Naive thymus-derived CD4-positive, alpha-beta T cell (primary cell): ENCODE measurements at regions of chr17 and their contacts with region 1.

Region 1: GRCh38 chr17:38557836-38558727 is 47.7 kb downstream of the SRCIN1 start:
- DNase-seq: peak; percentile 75 to 89 (median 85)
- ATAC-seq: peak; percentile 87
- H3K4me3 ChIP-seq: peak overlapping the region; percentile 81
- H3K4me3 Mint-ChIP-seq: peak overlapping the region; percentile 87 to 100 (median 96)
- H3K27ac ChIP-seq: no peak overlapping the region
- H3K27ac Mint-ChIP-seq: peak overlapping the region in 8 of 9 donors; percentile 34 to 87 (median 70)
- H3K4me1 ChIP-seq: peaks cover 0 to 23% of the 10 kb centered on the region in 2 donors
- H3K4me1 Mint-ChIP-seq: peaks cover 16 to 31% (median 25%) of the 10 kb centered on the region in 7 donors
- H3K27me3 ChIP-seq: peaks cover 10 to 20% of the 10 kb centered on the region in 2 donors
- H3K27me3 Mint-ChIP-seq: peaks cover 12 to 66% (median 18%) of the 10 kb centered on the region in 5 donors

Region 2: DNA sequence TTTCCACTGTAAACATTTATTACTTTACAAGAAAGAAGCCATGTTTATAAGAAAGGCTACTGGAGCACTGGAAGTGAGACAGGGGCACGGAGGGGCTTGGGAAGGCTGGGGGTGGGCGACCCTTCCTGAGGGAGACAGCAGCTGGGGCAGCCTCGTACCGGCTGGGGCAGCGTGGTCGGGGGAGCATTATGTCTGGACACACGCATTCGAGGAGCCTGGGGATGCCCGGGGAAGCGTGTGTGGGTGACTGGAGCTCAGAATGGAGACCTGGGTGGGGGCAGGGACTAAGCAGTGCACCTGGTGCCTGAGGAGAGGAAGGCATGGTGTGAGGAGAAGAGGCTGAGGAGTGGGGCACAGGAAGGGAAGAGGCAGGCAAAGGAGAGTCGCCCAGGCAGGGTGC is 16.8 kb before region 1 on chr17:
- CTCF ChIA-PET with region 1: no interaction called
- POLR2A ChIA-PET with region 1: no interaction called
- intact Hi-C with region 1: no loop called
- DNase-seq: no peak
- ATAC-seq: no peak
- H3K4me3 ChIP-seq: no peak overlapping the region
- H3K4me3 Mint-ChIP-seq: no peak overlapping the region
- H3K27ac ChIP-seq: no peak overlapping the region
- H3K27ac Mint-ChIP-seq: no peak overlapping the region
- H3K4me1 ChIP-seq: no peaks in the 10 kb centered on the region
- H3K4me1 Mint-ChIP-seq: no peaks in the 10 kb centered on the region
- H3K27me3 ChIP-seq: no peaks in the 10 kb centered on the region
- H3K27me3 Mint-ChIP-seq: peaks cover 0 to 13% (median 0%) of the 10 kb centered on the region in 5 donors

Region 3: GRCh38 chr17:38572669-38573365 is 14.7 kb after region 1 on chr17:
- CTCF ChIA-PET with region 1: interaction called, 5 read pairs
- POLR2A ChIA-PET with region 1: no interaction called
- intact Hi-C with region 1: loop called in 1 of 2 experiments (anchors 2 kb)
- DNase-seq: no peak
- ATAC-seq: peak; percentile 58
- H3K4me3 ChIP-seq: no peak overlapping the region
- H3K4me3 Mint-ChIP-seq: peak overlapping the region in 9 of 10 donors; percentile 5 to 80 (median 66)
- H3K27ac ChIP-seq: no peak overlapping the region
- H3K27ac Mint-ChIP-seq: no peak overlapping the region
- H3K4me1 ChIP-seq: no peaks in the 10 kb centered on the region
- H3K4me1 Mint-ChIP-seq: peaks cover 0 to 18% (median 8%) of the 10 kb centered on the region in 7 donors
- H3K27me3 ChIP-seq: peaks cover 20 to 32% of the 10 kb centered on the region in 2 donors
- H3K27me3 Mint-ChIP-seq: peaks cover 84 to 91% (median 87%) of the 10 kb centered on the region in 5 donors

Region 4: DNA sequence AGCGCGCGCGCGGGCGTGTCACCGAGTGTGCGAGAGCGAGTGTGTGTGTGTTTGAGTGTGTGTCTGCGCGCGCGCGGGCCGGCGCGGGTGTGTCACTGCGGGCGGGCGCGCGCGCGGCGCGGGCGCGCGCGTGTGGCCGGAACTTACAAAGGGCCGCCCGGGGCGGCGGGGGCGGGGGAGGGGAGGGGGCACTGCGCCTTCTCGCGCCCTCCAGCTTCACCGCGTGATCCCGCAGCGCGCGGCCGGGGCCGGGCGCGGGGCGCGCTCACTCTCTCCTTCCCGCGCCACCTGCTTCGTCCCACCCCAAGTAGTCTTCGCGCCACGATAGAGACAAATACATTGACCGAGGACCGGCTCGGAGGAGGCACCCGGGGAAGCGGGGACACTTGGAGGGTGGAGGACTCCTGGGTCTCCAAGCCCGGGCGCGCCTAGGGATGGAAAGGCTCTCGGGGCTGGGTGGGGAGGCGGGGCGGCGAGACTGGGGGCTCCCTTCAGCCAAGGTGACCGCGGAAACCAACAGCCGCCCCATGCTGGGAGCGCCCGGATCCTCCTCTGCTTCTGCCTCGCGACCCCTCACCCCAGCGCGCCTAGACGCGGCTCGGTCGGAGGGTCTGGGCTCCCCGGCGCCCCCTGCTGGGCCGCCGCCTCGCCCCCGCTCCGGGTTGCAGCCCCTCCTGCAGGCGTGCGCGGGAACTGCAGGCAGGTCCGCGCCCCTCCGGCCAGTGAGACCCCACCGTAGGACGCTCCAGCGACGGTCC is 48.0 kb after region 1 on chr17 and contains the start of gene SRCIN1:
- CTCF ChIA-PET with region 1: interaction called, 4 read pairs
- POLR2A ChIA-PET with region 1: no interaction called
- intact Hi-C with region 1: loop called (anchors 2 to 5 kb)
- DNase-seq: peak in 6 of 9 donors; percentile 26 to 74 (median 30)
- ATAC-seq: peak; percentile 74
- H3K4me3 ChIP-seq: peak within 1 kb of the TSS; percentile 50
- H3K4me3 Mint-ChIP-seq: peak within 1 kb of the TSS; percentile 54 to 81 (median 72)
- H3K27ac ChIP-seq: no peak within 1 kb of the TSS
- H3K27ac Mint-ChIP-seq: no peak within 1 kb of the TSS
- H3K4me1 ChIP-seq: peaks cover 9 to 11% of the 10 kb centered on the region in 2 donors
- H3K4me1 Mint-ChIP-seq: peaks cover 6 to 30% (median 13%) of the 10 kb centered on the region in 7 donors
- H3K27me3 ChIP-seq: peaks cover 10 to 37% of the 10 kb centered on the region in 2 donors
- H3K27me3 Mint-ChIP-seq: peaks cover 39 to 82% (median 50%) of the 10 kb centered on the region in 5 donors
- total RNA-seq, gene SRCIN1: 0.15 to 0.40 (median 0.23) TPM in 4 of 5 experiments, not detected in the other

Region 5: DNA sequence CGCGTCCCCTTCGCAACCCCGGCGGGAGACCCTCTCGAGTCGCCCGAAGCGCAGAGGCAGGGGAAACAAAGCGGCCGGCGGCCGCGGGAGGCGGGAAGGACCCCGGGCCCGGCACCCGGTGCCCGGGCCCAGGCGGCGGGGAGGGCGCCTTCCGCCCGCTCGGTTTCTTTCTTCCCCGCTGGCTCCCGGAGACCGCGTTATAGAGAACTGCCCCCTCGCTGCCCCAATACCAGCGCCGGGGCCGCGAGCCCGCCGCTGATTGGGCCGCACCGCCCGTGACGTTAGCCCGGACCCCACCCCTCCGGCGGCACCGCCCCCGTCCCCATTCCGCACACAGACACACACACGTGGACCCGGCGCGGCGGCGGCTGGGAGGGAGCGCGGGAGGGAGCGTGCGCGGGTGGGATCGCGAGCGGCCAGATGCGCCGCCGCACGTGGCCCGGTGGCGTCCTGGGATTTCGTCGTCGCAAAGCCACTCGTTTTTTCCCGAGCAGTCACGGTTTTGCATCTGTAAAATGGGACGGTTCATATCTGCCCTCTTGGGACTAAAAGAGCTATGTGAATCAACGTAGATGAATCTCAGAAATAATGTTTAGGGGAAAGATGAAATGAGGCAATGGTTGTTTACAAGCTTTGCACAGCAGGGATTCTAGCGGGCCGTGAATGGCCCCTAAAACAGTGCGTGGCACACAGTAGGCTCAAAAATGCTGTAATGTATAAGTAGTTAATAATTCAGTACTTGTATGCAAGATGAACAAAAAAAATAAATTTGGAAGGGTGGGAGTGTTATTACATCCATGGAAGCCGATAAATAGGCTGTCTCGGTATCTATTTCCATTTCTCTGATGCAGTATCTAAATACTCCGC is 116.9 kb after region 1 on chr17 and contains the start of gene EPOP:
- CTCF ChIA-PET with region 1: interaction called, 55 read pairs
- POLR2A ChIA-PET with region 1: no interaction called
- intact Hi-C with region 1: loop called in 1 of 2 experiments (anchors 2 kb)
- DNase-seq: peak; percentile 67 to 95 (median 71)
- ATAC-seq: peak; percentile 93
- H3K4me3 ChIP-seq: peak within 1 kb of the TSS; percentile 43
- H3K4me3 Mint-ChIP-seq: peak within 1 kb of the TSS; percentile 63 to 80 (median 75)
- H3K27ac ChIP-seq: peak within 1 kb of the TSS; percentile 54
- H3K27ac Mint-ChIP-seq: peak within 1 kb of the TSS in 4 of 9 donors; percentile 17 to 69 (median 58)
- H3K4me1 ChIP-seq: peaks cover 5 to 7% of the 10 kb centered on the region in 2 donors
- H3K4me1 Mint-ChIP-seq: peaks cover 8 to 30% (median 23%) of the 10 kb centered on the region in 7 donors
- H3K27me3 ChIP-seq: peaks cover 0 to 12% of the 10 kb centered on the region in 2 donors
- H3K27me3 Mint-ChIP-seq: peaks cover 19 to 37% (median 24%) of the 10 kb centered on the region in 5 donors
- total RNA-seq, gene EPOP: 0.19 to 13.4 (median 0.34) TPM

Region 6: DNA sequence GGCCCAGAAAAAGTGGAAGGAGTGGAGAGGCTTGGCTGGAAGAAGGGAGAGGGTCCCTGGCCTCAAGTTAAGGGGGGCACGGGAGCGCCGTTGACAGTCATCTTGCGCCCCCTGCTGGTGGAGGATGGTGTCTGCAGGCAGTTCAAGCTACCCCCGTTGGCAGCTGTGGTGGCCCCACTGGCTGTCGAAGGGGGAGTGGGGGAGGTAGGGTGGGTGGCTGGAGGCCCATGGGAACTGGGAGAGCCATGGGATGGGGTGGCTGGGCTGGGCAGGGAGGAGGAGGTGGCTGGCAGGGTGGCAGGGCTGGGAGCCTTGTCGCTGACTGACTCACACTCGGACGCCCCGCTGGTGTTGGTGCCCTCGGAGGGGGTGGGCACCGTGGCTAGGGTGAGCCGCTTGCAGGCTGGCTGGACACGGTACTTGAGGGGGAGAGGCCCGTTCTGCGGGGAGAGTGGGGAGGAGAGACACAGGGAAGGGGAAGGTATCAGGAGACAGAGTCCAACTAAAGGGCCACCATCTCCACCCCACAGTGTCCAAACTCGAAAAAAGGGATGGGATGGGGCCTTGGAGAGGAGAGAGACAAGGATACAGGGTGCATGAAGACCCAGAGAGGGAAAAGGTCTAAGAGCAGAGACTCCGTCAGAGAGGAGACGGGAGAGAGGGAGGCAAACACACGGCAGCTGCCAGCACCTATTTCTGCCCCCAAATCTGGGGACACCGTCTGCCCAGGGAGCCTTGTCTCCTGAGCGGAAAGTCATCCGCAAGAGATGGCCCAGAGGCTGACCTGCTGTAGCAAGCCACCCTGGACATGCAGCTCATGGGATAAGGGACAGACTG is 177.3 kb after region 1 on chr17:
- CTCF ChIA-PET with region 1: interaction called, 6 read pairs
- POLR2A ChIA-PET with region 1: interaction called, 4 read pairs
- intact Hi-C with region 1: loop called in 1 of 2 experiments (anchors 1 kb)
- DNase-seq: peak; percentile 42 to 80 (median 63)
- ATAC-seq: peak; percentile 55
- H3K4me3 ChIP-seq: no peak overlapping the region
- H3K4me3 Mint-ChIP-seq: no peak overlapping the region
- H3K27ac ChIP-seq: no peak overlapping the region
- H3K27ac Mint-ChIP-seq: peak overlapping the region in 3 of 9 donors; percentile 10 to 38 (median 30)
- H3K4me1 ChIP-seq: peaks cover 15 to 16% of the 10 kb centered on the region in 2 donors
- H3K4me1 Mint-ChIP-seq: peaks cover 23 to 50% (median 45%) of the 10 kb centered on the region in 7 donors
- H3K27me3 ChIP-seq: no peaks in the 10 kb centered on the region
- H3K27me3 Mint-ChIP-seq: peaks cover 0 to 6% (median 0%) of the 10 kb centered on the region in 5 donors